Tibial artery (tissue), 4 donors: ENCODE measurements at regions of chr20 and their contacts with region 1.

Region 1: DNA sequence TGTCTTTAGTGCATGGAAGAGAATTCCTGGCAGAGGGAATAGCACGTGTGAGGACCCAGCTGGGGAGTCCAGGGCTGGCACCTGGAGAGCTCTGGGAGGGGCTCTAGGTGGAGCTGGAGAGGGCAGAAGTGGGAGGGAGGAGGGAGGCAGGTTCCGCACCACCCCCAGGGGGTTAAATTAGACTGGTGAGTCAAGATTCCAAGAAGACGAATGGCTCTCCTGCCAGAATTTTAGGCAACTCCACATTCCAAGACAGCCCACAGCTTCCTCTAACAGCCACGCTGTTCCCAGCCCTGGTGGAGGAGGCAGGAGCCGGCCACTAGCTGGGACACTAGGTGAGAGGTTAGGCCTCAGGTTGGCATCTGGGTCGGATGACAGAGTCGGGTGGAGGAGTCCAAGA is 60.2 kb downstream of the TFAP2C start:
- DNase-seq: no peak
- H3K4me3 ChIP-seq: no peak overlapping the region
- H3K27ac ChIP-seq: no peak overlapping the region
- H3K4me1 ChIP-seq: peaks cover 0 to 17% (median 0%) of the 10 kb centered on the region in 4 donors
- H3K27me3 ChIP-seq: peaks cover 0 to 10% of the 10 kb centered on the region in 2 donors
- CTCF ChIP-seq: no peak

Region 2: DNA sequence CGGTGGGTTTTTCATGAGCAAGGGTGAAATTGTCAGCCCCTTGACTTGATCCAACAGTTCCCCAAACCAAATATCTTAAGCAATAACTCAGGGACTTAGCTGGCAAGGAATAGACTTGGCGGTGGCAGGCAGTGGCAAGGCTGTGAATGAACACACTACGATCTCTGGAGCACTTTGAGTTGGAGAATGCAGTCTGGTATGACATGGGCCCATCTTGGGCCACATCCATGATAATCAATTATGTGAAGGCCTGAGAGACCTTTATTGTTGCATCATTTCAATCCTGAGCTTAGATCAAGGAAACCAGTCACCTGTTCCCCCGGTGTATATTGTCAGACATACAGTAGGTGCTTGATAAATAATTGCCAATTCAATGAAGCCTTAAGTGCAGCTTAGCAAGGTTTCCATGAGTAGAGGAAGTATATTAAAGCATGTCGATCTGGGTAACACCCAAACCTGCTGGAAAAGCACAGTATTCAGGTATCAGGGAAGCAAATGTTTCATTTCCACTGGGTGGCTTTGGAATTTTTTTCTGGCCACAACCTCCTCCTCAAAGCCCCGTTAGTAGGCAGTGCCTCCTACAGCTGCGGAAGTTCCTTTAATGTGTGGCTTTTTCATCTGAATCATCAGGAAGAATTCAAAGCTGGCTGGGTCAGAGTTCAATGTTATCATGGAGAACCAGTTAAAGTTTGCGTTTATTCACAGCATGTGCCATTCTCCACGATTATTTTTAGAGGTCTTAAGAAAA is 267.0 kb before region 1 on chr20:
- intact Hi-C with region 1: no loop called
- DNase-seq: peak in 1 of 2 donors; percentile 20
- H3K4me3 ChIP-seq: no peak overlapping the region
- H3K27ac ChIP-seq: no peak overlapping the region
- H3K4me1 ChIP-seq: no peaks in the 10 kb centered on the region
- H3K27me3 ChIP-seq: no peaks in the 10 kb centered on the region
- CTCF ChIP-seq: no peak

Region 3: DNA sequence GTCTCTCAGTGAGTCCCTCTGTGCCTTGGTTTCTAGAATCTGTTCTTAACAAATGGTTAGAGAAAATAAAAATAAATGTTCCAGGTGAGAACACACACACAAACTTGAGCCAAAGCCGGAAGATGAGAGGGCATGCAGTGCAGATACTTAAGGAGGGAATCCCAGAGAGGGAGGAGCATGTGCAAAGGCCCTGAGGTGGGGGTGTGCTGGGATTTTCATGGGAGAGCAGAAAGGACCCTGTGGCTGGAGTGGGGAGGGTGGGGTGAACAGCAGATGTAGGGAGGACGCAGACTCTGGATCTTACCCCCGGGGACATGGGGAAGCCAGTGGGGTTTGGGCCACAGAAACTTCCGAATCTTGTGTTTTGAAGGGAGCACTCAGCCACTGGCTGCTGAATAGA is 42.7 kb before region 1 on chr20:
- intact Hi-C with region 1: no loop called
- DNase-seq: no peak
- H3K4me3 ChIP-seq: no peak overlapping the region
- H3K27ac ChIP-seq: no peak overlapping the region
- H3K4me1 ChIP-seq: no peaks in the 10 kb centered on the region
- H3K27me3 ChIP-seq: peaks cover 0 to 10% of the 10 kb centered on the region in 2 donors
- CTCF ChIP-seq: no peak

Region 4: GRCh38 chr20:56817780-56818675 is 128.7 kb after region 1 on chr20:
- intact Hi-C with region 1: no loop called
- DNase-seq: no peak
- H3K4me3 ChIP-seq: no peak overlapping the region
- H3K27ac ChIP-seq: no peak overlapping the region
- H3K4me1 ChIP-seq: no peaks in the 10 kb centered on the region
- H3K27me3 ChIP-seq: no peaks in the 10 kb centered on the region
- CTCF ChIP-seq: no peak

Region 5: DNA sequence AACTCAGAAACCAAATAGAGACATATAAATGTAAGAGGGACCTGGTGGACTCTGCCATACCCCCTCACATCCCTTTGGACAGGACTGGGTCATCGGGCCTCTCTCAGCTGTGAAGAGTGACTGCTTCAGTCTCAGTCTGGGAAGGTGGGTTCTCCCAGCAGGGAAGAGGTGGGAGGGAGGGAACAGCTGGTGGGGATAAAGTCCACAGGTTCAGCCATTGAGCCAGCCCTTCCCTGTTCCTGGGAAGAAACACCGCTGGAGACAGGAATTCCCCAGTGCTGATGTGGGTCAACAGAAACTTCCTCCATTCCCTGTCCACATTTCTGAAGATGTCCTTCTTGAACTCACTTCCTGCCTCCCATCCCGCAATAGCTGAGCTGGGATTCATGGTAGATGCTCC is 1229.8 kb after region 1 on chr20:
- intact Hi-C with region 1: loop called (anchors 5 kb)
- DNase-seq: no peak
- H3K4me3 ChIP-seq: no peak overlapping the region
- H3K27ac ChIP-seq: no peak overlapping the region
- H3K4me1 ChIP-seq: peaks cover 0 to 2% (median 0%) of the 10 kb centered on the region in 4 donors
- H3K27me3 ChIP-seq: no peaks in the 10 kb centered on the region
- CTCF ChIP-seq: no peak